Common myeloid progenitor, CD34-positive (primary cell): ENCODE measurements at regions of chr18 and their contacts with region 1.

Region 1: GRCh38 chr18:10032331-10033015 is 118.7 kb downstream of the VAPA start:
- DNase-seq: peak; percentile 73 to 88 (median 84)
- H3K4me3 ChIP-seq: peak overlapping the region; percentile 27 to 81 (median 60)
- H3K27ac ChIP-seq: peak overlapping the region; percentile 65 to 85
- H3K4me1 ChIP-seq: peaks cover 2 to 18% (median 15%) of the 10 kb centered on the region in 4 experiments
- H3K27me3 ChIP-seq: no peaks in the 10 kb centered on the region

Region 2: DNA sequence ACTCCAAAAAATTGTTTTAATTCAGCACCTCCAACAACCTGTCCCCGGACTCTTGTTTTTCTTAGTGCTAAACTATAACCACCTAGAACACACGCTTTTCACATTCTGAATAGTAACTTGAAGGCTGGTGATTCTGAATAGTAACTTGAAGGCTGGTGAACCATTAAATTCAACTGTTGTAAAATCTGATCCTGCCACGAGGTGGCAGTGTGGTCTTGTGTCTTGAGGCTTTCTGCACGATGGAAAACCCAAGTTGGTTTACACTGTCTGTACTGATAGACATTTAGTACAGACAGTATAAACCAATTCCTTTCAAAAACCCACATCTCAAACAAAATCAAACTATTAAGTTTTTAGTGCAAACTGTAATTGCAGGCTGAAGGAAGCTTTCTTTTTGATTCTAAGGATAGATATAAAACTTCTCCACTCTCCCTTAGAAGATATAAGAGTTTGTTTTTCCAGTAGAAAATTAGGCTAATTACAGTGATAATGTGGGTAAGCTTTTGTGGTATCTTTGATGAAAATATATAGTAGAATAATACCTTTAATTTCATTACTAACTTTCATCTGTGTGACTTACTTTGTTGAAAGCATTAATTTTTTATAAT is 61.1 kb before region 1 on chr18:
- CTCF ChIA-PET with region 1: interaction called, 13 read pairs
- POLR2A ChIA-PET with region 1: no interaction called
- DNase-seq: peak; percentile 81 to 92 (median 83)
- H3K4me3 ChIP-seq: no peak overlapping the region
- H3K27ac ChIP-seq: no peak overlapping the region
- H3K4me1 ChIP-seq: peaks cover 2 to 23% (median 21%) of the 10 kb centered on the region in 4 experiments
- H3K27me3 ChIP-seq: peaks cover 0 to 39% (median 2%) of the 10 kb centered on the region in 5 experiments

Region 3: GRCh38 chr18:9987931-9988330 is 44.5 kb before region 1 on chr18:
- CTCF ChIA-PET with region 1: no interaction called
- POLR2A ChIA-PET with region 1: no interaction called
- DNase-seq: no peak
- H3K4me3 ChIP-seq: no peak overlapping the region
- H3K27ac ChIP-seq: no peak overlapping the region
- H3K4me1 ChIP-seq: peaks cover 0 to 11% (median 9%) of the 10 kb centered on the region in 4 experiments
- H3K27me3 ChIP-seq: peaks cover 0 to 19% (median 8%) of the 10 kb centered on the region in 5 experiments

Region 4: DNA sequence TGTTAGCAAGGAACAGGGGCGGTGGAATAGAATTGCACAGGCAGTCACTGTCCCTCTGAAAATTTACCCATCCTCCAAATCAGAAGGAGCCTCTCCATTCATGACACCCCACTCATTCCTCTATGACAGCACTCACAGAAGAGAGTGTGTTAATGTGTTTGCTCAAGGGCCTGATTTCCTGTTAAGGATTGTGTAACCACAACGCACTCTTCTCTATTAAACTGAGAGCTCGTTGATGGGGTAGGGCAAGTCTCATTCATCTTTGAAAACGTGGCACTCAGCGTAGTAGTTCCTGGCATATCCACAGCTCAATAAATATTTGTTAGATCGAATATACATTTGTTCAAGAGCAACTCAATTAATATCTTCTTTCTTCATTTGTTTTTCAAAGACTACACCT is 12.3 kb before region 1 on chr18:
- CTCF ChIA-PET with region 1: interaction called, 24 read pairs
- POLR2A ChIA-PET with region 1: no interaction called
- DNase-seq: peak in 2 of 3 donors; percentile 44
- H3K4me3 ChIP-seq: no peak overlapping the region
- H3K27ac ChIP-seq: no peak overlapping the region
- H3K4me1 ChIP-seq: peaks cover 13 to 26% (median 19%) of the 10 kb centered on the region in 4 experiments
- H3K27me3 ChIP-seq: no peaks in the 10 kb centered on the region

Region 5: DNA sequence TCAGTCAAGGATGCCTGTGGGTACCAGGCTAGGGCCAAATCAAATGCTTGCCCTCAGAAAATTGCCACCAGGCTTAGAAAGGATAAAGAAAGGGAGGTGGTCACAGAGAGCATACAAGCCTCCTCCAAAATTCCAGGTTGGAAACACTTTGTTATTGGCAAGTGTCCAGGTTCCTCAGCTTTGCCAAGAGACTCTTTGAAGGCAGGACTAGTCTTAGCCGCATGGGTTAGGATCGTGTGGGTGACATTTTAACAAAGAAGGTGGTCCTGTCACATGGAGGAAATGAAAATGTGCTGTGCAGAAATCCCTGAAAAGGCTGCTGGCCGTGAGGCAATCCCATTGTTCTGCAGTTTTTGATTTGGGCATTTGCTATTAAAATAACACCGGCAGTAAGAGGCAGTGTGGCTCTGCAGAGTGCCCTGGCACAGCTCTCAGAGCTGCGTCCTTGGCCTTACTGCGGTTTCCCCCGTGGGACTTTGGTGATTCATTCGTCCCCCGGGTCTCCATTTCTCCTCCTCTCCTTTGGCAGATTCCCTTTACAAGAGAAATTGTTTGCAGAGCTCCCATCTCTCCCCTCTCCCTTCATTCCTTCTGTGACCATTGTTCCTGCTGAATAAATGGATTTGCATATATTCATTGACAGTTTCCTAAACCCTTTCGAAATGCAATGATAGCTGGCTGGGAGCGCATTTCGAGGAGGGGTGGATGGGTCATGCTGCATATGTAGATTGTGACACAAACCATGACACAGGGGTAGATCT is 68.6 kb after region 1 on chr18:
- CTCF ChIA-PET with region 1: no interaction called
- POLR2A ChIA-PET with region 1: no interaction called
- DNase-seq: no peak
- H3K4me3 ChIP-seq: no peak overlapping the region
- H3K27ac ChIP-seq: no peak overlapping the region
- H3K4me1 ChIP-seq: no peaks in the 10 kb centered on the region
- H3K27me3 ChIP-seq: peaks cover 0 to 7% (median 0%) of the 10 kb centered on the region in 5 experiments

Region 6: DNA sequence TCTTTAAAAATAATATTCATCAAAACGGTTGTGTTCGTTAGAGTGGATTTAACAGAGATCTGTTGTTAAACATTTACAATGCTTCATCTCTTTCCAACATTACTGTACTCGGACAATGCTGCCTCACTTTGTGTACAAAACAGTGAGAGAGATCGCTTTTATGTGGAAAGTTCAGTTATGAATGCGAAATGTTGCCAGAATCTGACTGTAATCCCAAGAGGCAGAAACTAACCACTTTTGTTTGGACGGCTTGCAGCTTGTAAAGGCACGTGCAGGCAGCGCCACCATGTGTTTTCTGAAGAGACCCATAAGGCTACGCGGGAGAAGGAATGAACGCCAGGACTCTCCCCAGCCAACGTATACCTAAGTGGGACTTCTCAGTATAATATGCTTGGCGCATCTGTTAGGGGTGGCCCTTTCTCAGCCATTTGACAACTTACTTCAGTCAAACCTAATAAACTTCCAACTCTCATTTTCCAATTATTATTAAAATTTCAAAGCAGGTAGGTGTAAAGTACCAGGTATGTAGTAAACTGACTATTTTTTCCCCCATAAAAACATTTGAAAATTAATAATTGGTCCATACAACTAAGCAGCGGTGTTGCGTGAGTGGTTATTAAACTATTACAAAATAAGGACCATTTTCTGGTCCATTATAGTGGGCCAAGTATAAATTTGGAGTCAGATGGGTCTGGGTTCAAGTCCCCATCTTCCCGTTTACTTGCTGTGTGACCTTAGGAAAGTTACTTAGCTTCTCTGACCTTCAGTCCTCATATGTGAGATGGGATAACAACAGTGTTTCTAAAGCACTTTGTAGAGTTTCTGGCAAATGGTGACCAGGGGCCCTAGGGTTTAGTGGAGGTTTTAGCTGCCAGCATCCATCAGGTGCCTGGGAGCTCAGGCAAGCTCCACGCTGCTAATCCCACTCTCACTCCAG is 487.8 kb after region 1 on chr18:
- CTCF ChIA-PET with region 1: interaction called, 55 read pairs
- POLR2A ChIA-PET with region 1: no interaction called
- DNase-seq: peak; percentile 88 to 92 (median 91)
- H3K4me3 ChIP-seq: no peak overlapping the region
- H3K27ac ChIP-seq: no peak overlapping the region
- H3K4me1 ChIP-seq: peaks cover 0 to 24% (median 15%) of the 10 kb centered on the region in 4 experiments
- H3K27me3 ChIP-seq: no peaks in the 10 kb centered on the region